Dorsolateral prefrontal cortex (tissue), 120 donors: ENCODE measurements at regions of chr20 and their contacts with region 1.

Region 1: DNA sequence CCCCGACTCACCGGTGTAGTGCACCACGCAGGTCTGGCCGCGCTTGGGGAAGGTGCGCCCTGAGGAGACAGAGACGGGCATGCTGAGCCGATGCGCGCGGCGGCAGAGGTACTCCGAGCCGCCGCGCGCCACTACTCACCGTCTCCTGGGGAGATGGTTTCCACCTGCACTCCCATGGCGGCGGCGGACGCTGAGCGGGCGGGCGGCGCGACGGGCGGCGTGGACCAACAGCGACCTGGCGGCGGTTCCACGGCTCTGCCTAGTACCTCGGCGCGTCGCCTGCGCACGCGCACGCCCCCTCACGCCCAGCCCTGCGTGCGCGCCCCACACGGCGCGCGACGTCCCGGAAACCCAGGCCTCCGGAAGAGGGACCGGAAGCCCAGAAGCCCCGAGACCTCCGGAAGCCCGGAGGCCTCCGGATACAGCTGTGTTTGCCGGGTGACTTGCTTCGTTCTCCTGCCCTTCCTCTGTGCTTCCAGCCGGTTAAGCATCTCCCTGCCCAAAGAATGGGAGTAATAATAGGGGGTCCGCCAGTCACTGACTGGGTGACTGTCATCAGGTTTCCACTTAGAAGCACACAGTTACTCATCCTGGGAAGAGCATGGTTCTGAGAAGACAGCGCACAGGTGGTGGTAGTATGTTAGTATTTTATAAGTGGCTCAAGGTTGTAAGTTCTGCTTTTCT is at the start of gene FKBP1A:
- DNase-seq: peak; percentile 73 to 91 (median 87)
- H3K4me3 ChIP-seq: peak within 1 kb of the TSS; percentile 59 to 96 (median 84)
- H3K27ac ChIP-seq: peak within 1 kb of the TSS in 58 of 59 donors; percentile 20 to 94 (median 80)
- H3K27me3 ChIP-seq: peaks cover 0 to 16% (median 0%) of the 10 kb centered on the region in 45 donors
- CTCF ChIP-seq: peak in 51 of 56 donors; percentile 15 to 69 (median 46)
- total RNA-seq, gene FKBP1A: 106 to 317 (median 196) TPM

Region 2: GRCh38 chr20:1313236-1313964 is 79.6 kb before region 1 on chr20:
- intact Hi-C with region 1: loop called in 1 of 2 experiments (anchors 2 kb)
- DNase-seq: peak; percentile 62 to 85 (median 74)
- H3K4me3 ChIP-seq: peak overlapping the region; percentile 23 to 71 (median 55)
- H3K27ac ChIP-seq: peak overlapping the region in 53 of 59 donors; percentile 2 to 84 (median 57)
- H3K27me3 ChIP-seq: no peaks in the 10 kb centered on the region
- CTCF ChIP-seq: peak; percentile 84 to 100 (median 99)

Region 3: DNA sequence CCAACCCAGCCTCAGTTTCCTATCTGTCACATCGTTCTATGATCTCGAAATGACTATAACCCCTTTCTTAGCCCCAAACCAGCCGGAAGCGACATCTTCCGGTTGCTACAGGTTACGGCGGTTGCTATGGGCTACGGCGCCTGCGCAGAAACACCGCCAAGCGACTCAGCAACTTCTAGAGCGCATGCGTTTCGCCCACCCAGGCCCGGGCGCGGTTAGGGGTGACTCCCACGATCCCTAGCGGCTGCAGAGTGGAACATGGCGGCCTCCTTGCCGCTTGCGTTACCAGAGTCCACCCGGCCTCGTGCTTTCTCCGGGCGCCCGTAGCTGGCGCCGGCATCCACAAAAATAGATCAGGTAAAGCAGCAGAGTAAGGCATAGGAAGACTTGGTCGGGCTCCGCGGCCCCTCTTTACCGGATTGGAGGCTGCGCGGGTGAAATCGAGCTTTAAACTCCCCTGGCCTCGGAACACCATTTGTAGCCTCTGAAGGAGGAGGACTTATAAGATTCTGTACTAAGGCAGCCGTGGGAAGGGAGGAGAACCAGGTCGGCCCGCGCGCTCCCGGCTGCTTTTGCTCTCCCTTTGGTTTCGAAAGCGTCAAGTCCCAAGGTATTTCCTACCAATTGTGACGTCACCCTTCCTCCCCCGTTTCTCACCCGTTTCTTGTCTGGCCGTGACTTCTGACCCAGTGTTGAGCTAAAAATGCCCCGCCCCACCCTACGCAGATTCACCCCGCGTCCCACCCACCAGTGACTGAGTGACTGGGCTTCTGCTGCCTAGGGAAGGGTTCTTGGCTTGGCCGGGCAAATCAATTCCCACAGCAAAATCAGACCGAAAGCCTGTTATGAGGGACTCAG is 67.6 kb before region 1 on chr20:
- intact Hi-C with region 1: loop called (anchors 1 to 2 kb)
- DNase-seq: peak; percentile 92 to 96 (median 95)
- H3K4me3 ChIP-seq: peak overlapping the region; percentile 62 to 100 (median 93)
- H3K27ac ChIP-seq: peak overlapping the region; percentile 66 to 100 (median 97)
- H3K27me3 ChIP-seq: no peaks in the 10 kb centered on the region
- CTCF ChIP-seq: peak in 55 of 56 donors; percentile 14 to 76 (median 59)

Region 4: GRCh38 chr20:1370548-1371110 is 22.3 kb before region 1 on chr20:
- intact Hi-C with region 1: loop called in 1 of 2 experiments (anchors 2 kb)
- DNase-seq: no peak
- H3K4me3 ChIP-seq: no peak overlapping the region
- H3K27ac ChIP-seq: peak overlapping the region in 37 of 59 donors; percentile 0 to 72 (median 35)
- H3K27me3 ChIP-seq: no peaks in the 10 kb centered on the region
- CTCF ChIP-seq: no peak

Region 5: GRCh38 chr20:1437235-1437904 is 44.4 kb after region 1 on chr20:
- intact Hi-C with region 1: loop called in 1 of 2 experiments (anchors 5 kb)
- DNase-seq: peak; percentile 57 to 85 (median 78)
- H3K4me3 ChIP-seq: no peak overlapping the region
- H3K27ac ChIP-seq: no peak overlapping the region
- H3K27me3 ChIP-seq: no peaks in the 10 kb centered on the region
- CTCF ChIP-seq: peak; percentile 63 to 92 (median 85)